ENCODE measurements at regions of chr9 and their contacts with region 1.

Region 1: DNA sequence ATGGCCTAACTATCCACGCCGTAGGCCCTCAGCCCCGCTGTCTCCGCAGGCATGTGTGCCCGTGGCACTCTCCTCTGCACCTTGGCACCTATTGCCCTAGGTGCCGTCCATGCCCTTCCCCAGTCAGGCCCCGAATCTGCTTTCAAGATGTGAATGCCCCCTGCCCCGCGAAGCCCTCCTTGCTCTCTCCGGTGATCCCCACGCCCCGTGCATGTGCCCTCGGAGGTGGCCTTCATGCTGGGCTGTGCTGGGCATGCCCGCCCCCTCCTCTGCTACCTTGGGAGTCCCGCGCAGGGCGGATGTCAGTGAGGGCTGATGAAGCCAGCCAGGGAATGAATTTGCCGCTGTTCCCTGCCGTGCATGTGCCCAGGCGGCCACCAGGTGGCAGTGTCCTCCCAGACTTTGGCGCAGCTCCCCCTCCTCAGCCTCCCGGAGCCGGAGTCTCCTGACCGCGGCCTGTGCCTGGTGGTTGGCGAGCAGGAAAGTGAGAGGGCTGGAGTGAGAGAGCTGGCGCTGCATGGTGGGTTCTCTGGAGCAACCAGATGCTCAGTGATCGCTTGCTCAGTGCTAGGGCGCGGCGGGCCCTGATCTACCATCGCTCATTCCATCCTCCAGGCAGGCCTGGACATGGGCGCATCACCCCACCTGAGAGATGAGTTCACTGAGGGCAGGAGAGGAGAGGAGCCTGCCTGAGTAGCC is 112.9 kb upstream of the LMX1B start:
- DNase-seq: peak; percentile 83
- ATAC-seq: peak; percentile 77 to 79

Region 2: DNA sequence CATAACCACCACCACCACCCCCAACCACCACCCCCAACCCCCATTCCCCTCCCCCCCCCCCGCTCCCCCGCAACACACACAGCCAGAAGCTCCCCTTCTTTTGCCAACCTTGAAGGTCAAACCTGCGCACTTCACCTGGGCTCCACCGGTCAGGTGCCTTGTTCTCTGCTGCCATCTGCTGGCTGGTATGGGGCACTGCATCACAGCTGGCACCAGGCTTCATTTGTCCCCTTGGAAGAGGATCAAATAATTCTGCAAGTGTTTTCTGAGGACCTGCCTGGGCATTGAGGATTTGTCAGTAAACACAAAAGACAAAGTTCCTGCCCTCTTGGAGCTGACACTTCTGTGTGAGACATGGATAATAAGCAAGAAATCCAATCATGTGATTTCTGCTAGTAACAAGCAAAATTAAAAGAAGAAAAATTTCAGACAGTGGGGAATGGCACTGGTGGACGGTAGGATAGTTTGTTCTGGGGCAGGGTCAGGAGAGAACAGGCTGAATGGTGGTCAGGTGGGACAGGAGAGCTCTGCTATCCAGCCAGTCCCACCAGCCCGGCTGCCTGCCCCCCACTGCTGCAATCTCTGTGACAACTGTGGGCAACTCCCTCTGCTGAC is 57.3 kb after region 1 on chr9:
- intact Hi-C with region 1: loop called (anchors 1 to 5 kb)
- DNase-seq: peak; percentile 57
- ATAC-seq: peak; percentile 74 to 76

Region 3: GRCh38 chr9:126564711-126565110 is 63.9 kb after region 1 on chr9:
- intact Hi-C with region 1: loop called in 1 of 2 experiments (anchors 5 kb)
- DNase-seq: no peak
- ATAC-seq: no peak

Region 4: DNA sequence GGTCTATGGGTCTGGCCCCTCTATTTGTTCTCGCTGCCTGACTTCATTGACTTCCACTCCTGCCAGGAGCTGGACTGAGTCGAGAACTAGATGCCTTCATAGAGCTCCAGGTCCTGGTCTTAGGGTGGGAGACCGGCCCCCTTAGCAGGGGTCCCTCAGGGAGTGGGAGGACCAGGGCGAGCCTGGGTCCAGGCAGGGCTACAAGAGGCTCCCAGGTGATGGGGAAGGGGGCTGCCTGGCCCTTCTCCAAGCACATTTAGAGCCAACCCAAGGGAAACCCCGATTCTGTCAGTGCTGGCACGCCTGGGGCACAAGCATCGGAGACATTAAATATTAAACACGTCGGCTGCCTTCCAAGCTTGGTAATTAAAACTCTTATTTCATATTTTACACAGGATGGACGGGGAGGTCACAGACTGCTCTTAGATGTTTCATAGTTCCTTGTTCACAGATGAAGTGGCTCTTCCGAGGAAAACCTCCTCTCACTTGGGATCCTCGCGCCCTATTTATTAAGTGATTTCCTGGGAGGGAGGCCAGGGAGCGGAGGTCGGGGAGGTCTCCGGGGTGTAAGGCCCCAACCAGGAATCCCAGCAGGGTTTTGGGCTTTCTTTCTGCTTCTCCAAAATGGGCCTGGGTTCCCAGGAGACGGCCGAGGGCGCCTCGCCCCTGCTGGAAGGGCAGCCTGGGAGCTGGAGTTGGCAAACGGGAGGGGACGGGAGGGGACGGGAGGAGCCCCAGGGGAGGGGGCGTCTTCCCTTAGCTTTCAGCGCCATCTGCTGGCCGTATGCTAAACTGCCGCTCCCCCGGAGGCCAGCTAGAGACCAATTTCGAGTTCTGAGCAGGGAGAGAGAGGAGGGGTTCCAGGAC is 280.6 kb after region 1 on chr9:
- intact Hi-C with region 1: loop called in 1 of 2 experiments (anchors 2 kb)
- DNase-seq: peak; percentile 82
- ATAC-seq: peak; percentile 90 to 94

Region 5: GRCh38 chr9:127578955-127579853 is 1078.4 kb after region 1 on chr9:
- intact Hi-C with region 1: no loop called
- DNase-seq: peak; percentile 94
- ATAC-seq: peak; percentile 93 to 97

Measured in left cardiac atrium (tissue), 4 donors.